Cardiac septum (tissue), 1 donor: ENCODE measurements at regions of chr6 and their contacts with region 1.

Region 1: DNA sequence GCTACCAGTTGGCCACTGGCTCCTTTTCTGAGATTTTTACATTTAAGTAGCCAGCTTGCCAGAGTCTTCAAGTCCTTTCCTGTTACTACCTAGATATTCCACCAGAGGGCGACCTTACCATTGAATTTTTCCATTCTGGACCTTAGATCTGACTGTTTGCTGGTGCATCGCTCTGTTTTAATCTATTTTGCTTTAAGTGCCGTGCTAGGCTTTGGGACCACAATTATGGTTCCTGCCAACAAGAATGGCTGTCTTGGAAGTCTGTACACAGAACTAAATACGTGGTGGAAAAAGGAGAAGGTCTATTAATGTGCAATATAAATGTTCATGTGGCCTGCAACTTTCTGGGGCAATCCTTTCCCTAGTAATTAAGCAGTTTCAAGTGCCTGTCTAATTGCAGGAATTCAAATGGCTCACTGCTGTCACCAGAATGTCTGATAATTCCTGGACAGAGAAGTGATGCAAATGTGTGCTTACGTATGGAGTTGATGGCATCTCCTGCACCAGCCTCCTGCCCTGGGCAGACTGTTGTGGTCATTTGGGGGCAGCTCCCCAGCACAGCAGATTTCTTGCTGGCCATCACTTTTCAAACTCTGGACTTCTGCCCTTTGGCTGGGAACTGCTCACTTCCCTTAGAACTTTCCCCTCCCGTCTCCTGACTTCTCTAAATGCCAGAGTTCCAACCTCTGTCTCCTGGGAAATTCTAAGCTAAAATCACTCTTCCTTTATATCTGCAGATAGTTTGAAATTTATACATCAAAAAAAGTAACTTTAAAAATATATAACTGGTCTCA is 5.6 kb upstream of the HLA-DOA start:
- DNase-seq: no peak

Region 2: GRCh38 chr6:33082702-33083101 is 67.7 kb after region 1 on chr6:
- intact Hi-C with region 1: loop called (anchors 1 kb)
- DNase-seq: no peak

Region 3: DNA sequence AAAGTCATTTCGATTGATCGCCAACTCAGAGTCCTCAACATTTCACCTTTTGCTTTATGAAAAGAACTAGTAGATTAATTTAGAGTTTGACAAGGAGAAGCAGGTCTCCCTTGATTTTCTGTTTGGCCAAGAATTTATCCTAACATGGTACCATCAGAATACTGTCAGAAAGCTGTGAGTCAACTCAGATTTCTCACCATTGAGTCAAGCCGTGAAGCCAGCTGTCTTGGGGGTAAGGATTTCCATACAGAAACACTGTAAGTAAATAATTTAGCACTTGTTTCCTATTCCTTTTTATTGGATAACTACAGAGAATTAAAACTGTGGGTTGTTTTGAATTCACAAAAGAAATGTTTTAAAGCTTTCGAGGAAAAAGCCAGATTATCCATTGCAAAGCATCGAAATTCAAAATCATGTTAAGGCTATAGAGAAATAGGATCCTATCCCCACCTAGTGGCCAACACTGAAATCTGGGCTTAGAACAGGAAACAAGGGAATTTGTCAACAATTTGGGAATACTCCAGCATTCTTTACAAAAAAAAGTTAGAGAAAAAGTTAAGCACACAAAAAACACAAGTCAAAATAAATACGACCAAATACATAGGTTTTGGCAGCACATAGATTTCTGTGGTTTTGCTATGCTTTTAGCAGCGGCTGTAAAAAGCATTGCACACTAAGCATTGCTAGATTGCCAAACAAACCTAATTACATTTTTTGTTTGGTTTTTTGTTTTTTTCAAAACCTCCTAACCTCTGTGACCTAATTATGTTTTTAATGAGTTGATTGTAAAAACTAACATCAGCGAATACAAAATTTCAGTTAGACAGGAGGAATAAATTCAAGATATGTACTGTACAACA is 133.0 kb after region 1 on chr6:
- intact Hi-C with region 1: loop called (anchors 10 kb)
- DNase-seq: no peak